ENCODE measurements at regions of chr6 and their contacts with region 1.

Region 1: DNA sequence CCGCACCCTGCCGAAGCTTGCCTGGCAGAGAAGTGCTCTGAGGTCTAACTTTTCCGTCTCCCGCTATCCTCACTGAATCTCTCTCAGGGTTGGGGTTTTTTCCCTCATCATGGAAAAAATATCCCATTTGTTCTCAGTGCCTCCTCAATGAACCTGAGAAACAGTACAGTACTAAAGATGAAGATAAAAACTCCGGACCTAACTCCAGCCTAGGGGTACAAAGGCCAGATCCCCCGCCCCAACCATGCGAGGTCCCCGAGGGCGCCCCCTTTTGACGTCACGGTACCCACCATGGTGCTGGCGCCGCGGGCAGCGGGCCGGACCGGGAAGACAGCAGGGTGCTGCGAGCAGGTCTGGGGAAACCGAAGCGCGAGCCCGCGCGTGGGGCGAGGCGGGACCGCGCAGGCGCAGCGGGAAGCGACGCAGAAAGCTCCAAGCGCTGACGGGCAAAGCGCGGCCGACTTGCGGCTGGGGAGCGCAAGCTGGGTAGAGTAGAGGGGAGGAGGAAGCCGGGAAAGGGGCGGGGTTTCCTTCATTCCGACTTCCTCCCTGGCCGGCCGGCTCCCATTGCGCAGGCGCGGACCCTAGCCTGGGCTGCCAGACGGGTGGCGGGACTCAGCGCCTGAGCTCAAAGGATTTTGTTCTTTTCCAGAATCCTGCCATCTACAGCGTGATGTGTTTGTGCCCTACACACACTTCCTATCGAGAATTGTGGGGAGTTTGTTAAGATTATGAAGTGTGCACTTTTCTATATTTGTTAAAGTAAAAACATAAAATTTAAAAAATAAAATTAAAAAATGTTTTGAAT is at the start of gene LSM2:
- DNase-seq: peak; percentile 99
- H3K4me3 ChIP-seq: peak within 1 kb of the TSS; percentile 51 to 64 (median 58)
- H3K27ac ChIP-seq: peak within 1 kb of the TSS; percentile 87 to 98 (median 92)
- H3K4me1 ChIP-seq: peaks cover 0 to 25% (median 19%) of the 10 kb centered on the region in 4 donors
- H3K27me3 ChIP-seq: no peaks in the 10 kb centered on the region
- CTCF ChIP-seq: no peak
- EP300 ChIP-seq: peak in 1 of 4 donors; percentile 80
- POLR2A ChIP-seq: peak; percentile 66 to 76
- total RNA-seq, gene LSM2: 29.6 to 53.5 (median 48.1) TPM

Region 2: DNA sequence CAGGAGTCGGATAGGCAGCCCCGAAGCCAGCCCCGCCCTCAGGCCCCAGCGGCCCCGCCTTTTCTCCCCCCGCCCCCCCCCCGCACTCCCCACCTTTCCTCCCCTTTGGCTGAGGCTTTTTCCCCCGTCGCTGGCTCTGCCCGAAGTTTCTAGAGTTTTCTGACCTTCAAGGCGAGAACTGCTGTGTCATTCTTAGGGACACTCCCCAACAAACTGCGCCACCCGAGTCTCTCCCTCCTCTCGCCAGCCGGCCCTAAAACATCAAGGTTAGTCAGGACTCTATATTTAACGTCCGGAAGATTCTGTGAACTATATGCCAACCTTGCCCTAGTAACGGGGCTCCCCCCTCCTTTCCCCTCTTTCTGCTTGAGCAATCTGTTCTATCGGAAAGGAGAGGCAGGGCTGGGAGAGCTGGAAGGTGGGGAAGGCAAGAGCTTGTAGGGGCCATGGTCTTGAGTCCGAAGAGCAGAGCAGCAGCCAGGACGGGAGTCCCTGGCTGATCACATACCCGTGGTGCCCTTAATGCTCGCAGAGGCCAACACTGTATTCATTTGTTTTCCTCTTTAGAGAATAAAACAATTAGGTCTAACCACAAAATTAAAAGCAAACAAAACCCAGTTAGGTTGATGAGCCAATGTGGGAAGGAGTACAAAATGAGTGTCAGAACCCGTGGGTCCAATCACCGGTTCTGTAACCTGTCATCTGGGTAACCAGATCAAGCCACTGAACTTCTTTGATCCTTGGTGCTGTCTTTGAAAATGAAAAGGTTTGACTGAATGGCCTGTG is 15.6 kb after region 1 on chr6:
- intact Hi-C with region 1: loop called (anchors 1 kb)
- DNase-seq: peak; percentile 97
- H3K4me3 ChIP-seq: peak overlapping the region; percentile 45 to 61 (median 50)
- H3K27ac ChIP-seq: peak overlapping the region; percentile 93 to 98 (median 95)
- H3K4me1 ChIP-seq: peaks cover 0 to 72% (median 69%) of the 10 kb centered on the region in 4 donors
- H3K27me3 ChIP-seq: no peaks in the 10 kb centered on the region
- CTCF ChIP-seq: no peak
- EP300 ChIP-seq: peak in 1 of 4 donors; percentile 28
- POLR2A ChIP-seq: peak; percentile 74 to 76